Ascending aorta (tissue), 2 donors: ENCODE measurements at regions of chr1 and their contacts with region 1.

Region 1: GRCh38 chr1:93585059-93585966 is 96.3 kb downstream of the BCAR3 start:
- DNase-seq: peak in 1 of 2 donors; percentile 80
- H3K4me3 ChIP-seq: no peak overlapping the region
- H3K27ac ChIP-seq: peak overlapping the region; percentile 71 to 74
- H3K4me1 ChIP-seq: peaks cover 0 to 13% of the 10 kb centered on the region in 2 donors
- H3K27me3 ChIP-seq: no peaks in the 10 kb centered on the region
- CTCF ChIP-seq: no peak

Region 2: DNA sequence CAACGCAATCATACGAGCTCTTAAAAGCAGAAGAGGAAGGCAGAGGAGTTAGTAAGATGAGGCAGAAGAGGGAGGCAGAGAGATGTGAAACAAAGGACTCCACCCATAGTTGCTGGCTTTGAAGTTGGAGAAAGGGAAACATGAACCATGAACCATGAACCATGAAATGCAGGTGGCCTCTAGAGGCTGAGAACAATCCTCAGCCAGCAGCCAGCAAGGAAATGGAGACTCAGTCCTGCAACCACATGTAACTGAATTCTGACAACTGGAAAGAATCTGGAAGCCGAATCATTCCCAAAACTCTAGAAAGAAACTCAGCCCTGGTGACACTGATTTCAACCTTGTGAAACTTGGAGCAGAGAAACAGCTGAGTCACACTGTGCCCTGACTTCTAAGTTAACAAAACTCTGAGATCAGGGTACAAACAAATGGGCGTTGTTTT is 634.2 kb before region 1 on chr1:
- intact Hi-C with region 1: no loop called
- DNase-seq: no peak
- H3K4me3 ChIP-seq: no peak overlapping the region
- H3K27ac ChIP-seq: peak overlapping the region; percentile 76 to 77
- H3K4me1 ChIP-seq: peaks cover 0 to 12% of the 10 kb centered on the region in 2 donors
- H3K27me3 ChIP-seq: no peaks in the 10 kb centered on the region
- CTCF ChIP-seq: no peak

Region 3: DNA sequence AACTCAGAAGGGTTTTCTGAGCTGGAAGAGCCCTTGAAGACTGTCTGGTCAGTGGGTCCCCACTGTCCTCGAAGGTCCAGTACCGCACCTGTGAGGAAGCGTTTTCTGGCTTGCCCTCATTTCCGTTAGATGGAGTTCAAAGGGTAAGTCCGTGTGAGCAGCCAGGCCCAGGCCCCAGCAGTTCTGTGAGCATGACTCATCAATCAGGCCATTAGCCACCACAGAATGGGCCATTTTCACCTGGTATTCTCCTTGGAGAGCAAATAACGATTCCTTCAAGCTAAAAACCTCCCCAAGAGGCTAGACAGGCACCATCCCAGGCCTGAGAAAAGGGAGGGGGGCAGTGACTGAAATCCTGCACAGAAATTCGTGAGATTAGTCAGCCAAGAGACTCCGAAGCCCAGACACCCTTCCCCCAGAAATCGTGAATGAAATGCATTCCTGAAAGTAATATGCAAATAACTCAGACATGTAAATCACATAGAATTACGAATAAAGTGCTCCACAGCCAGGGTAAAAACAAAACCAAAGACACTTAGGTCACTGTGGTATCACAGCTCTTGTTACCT is 30.4 kb after region 1 on chr1:
- intact Hi-C with region 1: loop called (anchors 2 kb)
- DNase-seq: no peak
- H3K4me3 ChIP-seq: no peak overlapping the region
- H3K27ac ChIP-seq: peak overlapping the region; percentile 83 to 87
- H3K4me1 ChIP-seq: peaks cover 19 to 49% of the 10 kb centered on the region in 2 donors
- H3K27me3 ChIP-seq: no peaks in the 10 kb centered on the region
- CTCF ChIP-seq: no peak

Region 4: GRCh38 chr1:94142022-94142421 is 556.7 kb after region 1 on chr1:
- intact Hi-C with region 1: no loop called
- DNase-seq: no peak
- H3K4me3 ChIP-seq: no peak overlapping the region
- H3K27ac ChIP-seq: no peak overlapping the region
- H3K4me1 ChIP-seq: peaks cover 0 to 4% of the 10 kb centered on the region in 2 donors
- H3K27me3 ChIP-seq: no peaks in the 10 kb centered on the region
- CTCF ChIP-seq: no peak